HepG2 (cell line): ENCODE measurements at regions of chr3 and their contacts with region 1.

Region 1: GRCh38 chr3:89560546-89560945 is 453.1 kb downstream of the EPHA3 start:
- DNase-seq: no peak
- ATAC-seq: no peak
- H3K4me3 ChIP-seq: no peak overlapping the region
- H3K27ac ChIP-seq: no peak overlapping the region
- H3K4me1 ChIP-seq: no peaks in the 10 kb centered on the region
- H3K27me3 ChIP-seq: no peaks in the 10 kb centered on the region
- CTCF ChIP-seq: no peak
- EP300 ChIP-seq: no peak
- POLR2A ChIP-seq: no peak
- RAD21 ChIP-seq: no peak

Region 2: DNA sequence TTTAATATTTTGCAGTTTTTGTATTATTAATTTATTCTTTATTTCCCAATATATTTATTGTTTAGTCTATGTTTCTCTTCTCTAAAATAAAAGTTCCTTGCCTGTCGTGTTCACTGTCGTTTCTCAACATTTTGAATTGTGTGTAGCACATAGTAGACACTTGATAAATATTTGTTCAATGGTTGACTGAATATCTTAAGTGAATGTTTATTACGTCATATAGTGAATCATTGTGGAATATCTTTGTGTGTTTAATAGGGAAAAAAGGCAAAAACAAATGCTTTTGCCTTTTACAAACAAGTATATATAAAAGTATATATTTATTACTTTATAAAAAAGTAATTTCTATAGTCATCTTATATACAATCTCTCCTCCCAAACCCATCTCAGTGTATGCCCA is 119.1 kb after region 1 on chr3:
- CTCF ChIA-PET with region 1: no interaction called
- POLR2A ChIA-PET with region 1: no interaction called
- in situ Hi-C with region 1: no loop called
- intact Hi-C with region 1: loop called (anchors 10 kb)
- DNase-seq: no peak
- ATAC-seq: no peak
- H3K4me3 ChIP-seq: no peak overlapping the region
- H3K27ac ChIP-seq: no peak overlapping the region
- H3K4me1 ChIP-seq: no peaks in the 10 kb centered on the region
- H3K27me3 ChIP-seq: no peaks in the 10 kb centered on the region
- CTCF ChIP-seq: no peak
- EP300 ChIP-seq: no peak
- POLR2A ChIP-seq: no peak
- RAD21 ChIP-seq: no peak

Region 3: DNA sequence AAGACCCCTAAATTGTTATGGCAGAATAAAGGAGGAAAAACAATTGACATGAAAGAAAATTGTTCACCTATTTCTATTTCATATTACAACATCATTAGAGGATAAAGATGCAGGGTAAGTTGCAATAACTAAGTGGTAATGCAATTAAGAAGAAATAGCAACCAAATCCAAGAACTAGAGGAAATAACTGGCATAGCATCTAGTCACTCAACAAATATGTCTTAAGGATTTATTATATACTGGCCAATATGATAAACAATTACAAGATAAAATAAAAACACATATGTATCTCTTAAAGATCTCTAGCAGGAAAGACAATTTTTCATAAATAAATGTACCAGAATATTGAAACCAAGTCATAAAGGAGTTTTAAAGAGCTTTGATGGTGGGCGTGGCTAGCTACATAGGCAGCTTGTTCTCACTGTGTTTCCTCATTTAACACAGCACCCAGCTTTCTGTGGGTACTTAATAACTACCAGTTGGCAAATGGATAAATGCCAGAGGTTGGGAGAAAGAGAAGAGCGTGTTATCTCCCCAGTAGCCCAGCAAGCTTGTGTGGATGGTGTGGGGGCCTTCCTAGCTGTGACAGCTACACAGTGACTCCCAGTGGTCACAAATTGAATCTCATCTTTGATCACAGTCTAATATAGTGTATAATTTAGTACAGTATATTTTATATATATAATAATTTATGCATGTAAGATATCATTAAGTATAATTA is 530.8 kb after region 1 on chr3:
- CTCF ChIA-PET with region 1: no interaction called
- POLR2A ChIA-PET with region 1: no interaction called
- in situ Hi-C with region 1: no loop called
- intact Hi-C with region 1: loop called (anchors 1 kb)
- DNase-seq: peak; percentile 2
- ATAC-seq: peak; percentile 89
- H3K4me3 ChIP-seq: no peak overlapping the region
- H3K27ac ChIP-seq: no peak overlapping the region
- H3K4me1 ChIP-seq: no peaks in the 10 kb centered on the region
- H3K27me3 ChIP-seq: no peaks in the 10 kb centered on the region; a peak in 1 of 5 replicates
- CTCF ChIP-seq: peak; percentile 42
- EP300 ChIP-seq: no peak
- POLR2A ChIP-seq: no peak
- RAD21 ChIP-seq: no peak